Dorsolateral prefrontal cortex (tissue), 120 donors: ENCODE measurements at regions of chr10 and their contacts with region 1.

Region 1: DNA sequence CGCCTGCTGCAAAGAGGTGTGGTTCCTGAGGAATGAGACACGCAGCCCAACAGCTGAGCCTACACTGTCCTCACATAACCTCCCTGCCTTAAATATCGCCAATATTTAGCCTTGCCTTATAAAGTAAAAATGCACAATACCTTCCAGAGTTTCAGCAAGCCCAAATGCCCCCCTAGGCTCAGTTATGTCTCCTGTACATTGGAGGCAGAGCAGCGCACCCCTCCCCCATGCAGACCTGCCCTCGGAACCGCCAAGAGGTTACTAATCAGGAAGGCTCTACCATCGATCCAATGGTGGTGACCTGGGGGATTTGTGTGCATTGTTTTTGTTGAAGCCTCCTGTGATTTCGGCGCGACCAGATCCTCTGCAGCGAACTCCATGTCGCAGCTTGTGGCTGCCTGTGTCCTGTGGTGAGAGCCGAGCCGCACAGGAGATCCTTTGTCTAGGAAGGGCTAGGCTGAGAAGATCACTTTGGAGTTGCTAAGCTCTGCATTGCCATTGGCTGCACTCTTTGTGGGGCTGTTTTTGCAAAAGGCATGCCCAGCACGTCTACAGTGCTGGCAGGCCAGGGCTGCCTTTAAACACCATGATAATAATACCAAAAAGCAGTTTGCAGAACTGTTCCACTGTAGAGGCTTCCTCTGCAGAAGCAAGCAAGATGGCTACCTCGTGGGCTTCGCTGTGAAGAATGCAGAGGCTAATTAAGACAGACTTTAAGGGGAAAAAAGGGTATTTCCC is 40.1 kb downstream of the TET1 start:
- DNase-seq: peak; percentile 60 to 93 (median 86)
- H3K4me3 ChIP-seq: peak overlapping the region; percentile 38 to 78 (median 62)
- H3K27ac ChIP-seq: peak overlapping the region; percentile 18 to 96 (median 88)
- H3K27me3 ChIP-seq: no peaks in the 10 kb centered on the region
- CTCF ChIP-seq: peak in 11 of 56 donors; percentile 5 to 38 (median 13)

Region 2: DNA sequence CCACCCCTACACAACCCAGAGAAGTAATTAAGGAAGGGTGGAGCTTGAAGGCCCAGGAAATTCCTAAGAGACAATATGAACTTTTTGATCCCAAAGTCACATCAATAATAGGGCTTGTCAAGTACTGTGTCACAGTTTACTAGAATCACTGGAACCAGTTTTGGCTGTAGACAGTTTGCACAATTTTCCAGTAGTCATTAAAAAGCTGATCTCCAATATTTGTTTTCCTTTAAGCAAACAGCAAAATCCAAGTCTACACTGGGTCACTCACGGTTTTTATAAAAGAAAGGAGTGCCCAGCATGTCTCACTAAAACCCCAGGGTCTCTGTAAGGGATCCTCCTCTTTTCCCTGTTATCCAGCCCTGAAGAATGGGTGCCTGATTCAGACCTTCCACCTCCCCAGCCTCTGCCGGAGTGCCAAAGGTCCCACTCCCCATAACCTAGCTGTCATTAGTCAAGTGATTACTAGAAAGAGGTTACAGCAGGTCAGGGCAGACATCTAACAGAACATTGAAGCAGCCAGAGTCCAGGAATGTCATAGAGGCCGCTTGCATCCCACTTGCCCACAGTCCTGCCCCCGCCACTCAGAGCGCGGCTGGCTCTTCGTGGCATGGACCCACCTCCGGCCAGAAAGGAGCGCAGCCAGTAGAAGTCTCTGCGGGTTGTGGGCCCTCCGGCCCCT is 73.4 kb before region 1 on chr10:
- intact Hi-C with region 1: loop called in 1 of 2 experiments (anchors 5 kb)
- DNase-seq: no peak
- H3K4me3 ChIP-seq: peak overlapping the region; percentile 79 to 100 (median 96)
- H3K27ac ChIP-seq: peak overlapping the region; percentile 63 to 97 (median 91)
- H3K27me3 ChIP-seq: no peaks in the 10 kb centered on the region
- CTCF ChIP-seq: no peak

Region 3: GRCh38 chr10:68550747-68551411 is 49.3 kb before region 1 on chr10:
- intact Hi-C with region 1: loop called in 1 of 2 experiments (anchors 1 kb)
- DNase-seq: peak in 2 of 10 donors; percentile 7 to 39
- H3K4me3 ChIP-seq: no peak overlapping the region
- H3K27ac ChIP-seq: no peak overlapping the region
- H3K27me3 ChIP-seq: no peaks in the 10 kb centered on the region
- CTCF ChIP-seq: peak; percentile 33 to 80 (median 71)

Region 4: GRCh38 chr10:68560186-68560942 is 39.8 kb before region 1 on chr10 and contains the start of gene TET1:
- intact Hi-C with region 1: loop called in 1 of 2 experiments (anchors 5 kb)
- DNase-seq: peak in 4 of 10 donors; percentile 14 to 54 (median 28)
- H3K4me3 ChIP-seq: peak within 1 kb of the TSS; percentile 39 to 85 (median 71)
- H3K27ac ChIP-seq: peak within 1 kb of the TSS in 5 of 59 donors; percentile 21 to 73 (median 56)
- H3K27me3 ChIP-seq: peaks cover 0 to 22% (median 4%) of the 10 kb centered on the region in 45 donors
- CTCF ChIP-seq: no peak
- total RNA-seq, gene TET1: 4.6 to 9.9 (median 7.4) TPM

Region 5: GRCh38 chr10:68720793-68721672 is 120.8 kb after region 1 on chr10 and contains the start of gene CCAR1:
- intact Hi-C with region 1: loop called (anchors 2 to 5 kb)
- DNase-seq: peak; percentile 93 to 97 (median 95)
- H3K4me3 ChIP-seq: peak within 1 kb of the TSS; percentile 67 to 100 (median 96)
- H3K27ac ChIP-seq: peak within 1 kb of the TSS; percentile 79 to 99 (median 97)
- H3K27me3 ChIP-seq: no peaks in the 10 kb centered on the region
- CTCF ChIP-seq: peak in 21 of 56 donors; percentile 9 to 49 (median 26)
- total RNA-seq, gene CCAR1: 43.8 to 95.7 (median 69.5) TPM

Region 6: GRCh38 chr10:68876246-68877138 is 276.3 kb after region 1 on chr10:
- intact Hi-C with region 1: no loop called
- DNase-seq: no peak
- H3K4me3 ChIP-seq: no peak overlapping the region
- H3K27ac ChIP-seq: peak overlapping the region in 23 of 59 donors; percentile 1 to 72 (median 34)
- H3K27me3 ChIP-seq: no peaks in the 10 kb centered on the region
- CTCF ChIP-seq: no peak